Activated T-helper 1 cell treated with anti-CD3 and anti-CD28 coated beads, Interleukin-12 subunit alpha, Interleukin-12 subunit beta, Interleukin-2, Interleukin-4 antibody, amounts not matched to agents 30 ng/mL and 10 ng/mL and 1 ng/mL, durations not matched to agents 14 hours and 24 hours and 36 hours (primary cell): ENCODE measurements at regions of chr14 and their contacts with region 1.

Region 1: GRCh38 chr14:30214461-30215090 is 286.9 kb upstream of the PRKD1 start:
- DNase-seq: no peak
- H3K4me3 Mint-ChIP-seq: no peak overlapping the region
- H3K27ac Mint-ChIP-seq: no peak overlapping the region
- H3K4me1 Mint-ChIP-seq: no peaks in the 10 kb centered on the region
- H3K27me3 Mint-ChIP-seq: no peaks in the 10 kb centered on the region

Region 2: DNA sequence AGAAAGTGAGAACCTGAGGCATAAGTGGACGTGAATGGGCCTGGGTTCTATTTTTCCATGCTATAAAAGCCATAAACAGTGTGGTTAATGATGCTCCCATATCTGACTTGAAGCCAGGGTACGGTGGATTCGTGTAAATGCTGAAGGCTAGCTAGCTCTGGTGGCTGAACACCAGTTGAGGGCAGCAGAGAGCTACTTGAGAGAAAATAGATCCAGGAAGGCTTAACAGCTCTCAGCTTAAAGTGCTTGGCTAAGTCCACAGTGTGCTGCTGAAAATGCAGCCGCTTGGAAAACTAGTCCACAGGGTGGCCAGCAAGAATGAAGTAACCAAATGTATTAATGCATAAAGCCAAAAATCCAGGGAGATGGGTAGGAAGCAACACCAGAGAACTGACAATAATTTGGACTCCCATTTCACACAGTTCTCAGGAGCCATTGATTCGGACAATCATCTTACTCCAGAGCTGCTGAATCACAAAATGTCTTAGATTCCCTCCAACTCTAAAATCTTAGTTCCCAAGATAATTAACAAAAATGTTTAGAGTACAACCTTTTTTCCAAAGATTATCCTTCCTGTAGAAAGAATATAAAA is 1463.0 kb before region 1 on chr14:
- intact Hi-C with region 1: loop called (anchors 5 kb)
- DNase-seq: no peak
- H3K4me3 Mint-ChIP-seq: no peak overlapping the region
- H3K27ac Mint-ChIP-seq: no peak overlapping the region
- H3K4me1 Mint-ChIP-seq: no peaks in the 10 kb centered on the region
- H3K27me3 Mint-ChIP-seq: peaks cover 21% of the 10 kb centered on the region